ENCODE measurements at regions of chr12 and their contacts with region 1.

Region 1: DNA sequence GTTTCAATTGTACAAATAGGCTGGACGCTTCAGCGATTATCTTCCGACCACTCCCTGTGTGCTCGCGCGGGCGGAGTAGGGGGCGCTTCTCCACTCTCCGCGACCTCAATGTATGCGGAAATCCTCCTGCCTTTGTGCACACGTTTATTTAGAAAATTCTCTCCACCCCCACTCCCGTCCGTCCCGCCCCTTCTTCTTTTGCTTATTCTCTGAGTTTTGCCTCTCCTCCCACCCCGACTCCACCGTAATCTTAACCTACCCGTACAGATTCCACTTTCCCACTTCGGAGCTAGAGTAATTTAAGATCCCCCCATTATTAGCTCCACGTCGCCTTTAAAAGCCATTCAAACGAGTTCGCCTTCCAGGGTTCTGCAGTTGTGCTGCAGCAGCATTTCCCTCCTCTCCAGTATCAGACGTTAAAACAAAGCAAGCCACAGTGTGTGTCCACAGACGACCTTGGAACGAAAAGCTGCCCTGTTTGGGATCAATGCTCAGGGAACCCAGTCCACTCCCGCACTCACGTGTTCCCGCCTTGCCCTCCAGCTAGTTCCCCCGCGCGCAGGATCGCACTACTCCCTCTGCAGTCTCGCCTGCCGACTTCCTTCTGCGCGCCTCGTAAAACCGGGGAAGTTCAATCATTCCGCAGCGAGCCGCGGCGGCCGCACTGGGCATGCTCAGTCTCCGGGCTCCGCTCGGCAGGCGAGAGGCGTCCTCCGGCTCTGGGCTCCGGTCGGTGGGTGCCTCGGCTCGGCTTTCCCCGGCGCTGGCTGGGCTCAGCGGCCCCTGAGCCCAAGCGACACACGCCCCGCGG is at the start of gene ANO6:
- DNase-seq: peak; percentile 84
- ATAC-seq: peak; percentile 84
- H3K4me3 ChIP-seq: peak within 1 kb of the TSS; percentile 60
- H3K27ac ChIP-seq: peak within 1 kb of the TSS; percentile 77
- H3K4me1 ChIP-seq: peaks cover 4% of the 10 kb centered on the region; the same call in 1 of the 2 replicates
- H3K27me3 ChIP-seq: no peaks in the 10 kb centered on the region
- CTCF ChIP-seq: peak; percentile 42
- POLR2A ChIP-seq: peak; percentile 79
- RAD21 ChIP-seq: peak; percentile 42
- total RNA-seq, gene ANO6: 41.0 and 46.7 TPM in 2 replicates

Region 2: DNA sequence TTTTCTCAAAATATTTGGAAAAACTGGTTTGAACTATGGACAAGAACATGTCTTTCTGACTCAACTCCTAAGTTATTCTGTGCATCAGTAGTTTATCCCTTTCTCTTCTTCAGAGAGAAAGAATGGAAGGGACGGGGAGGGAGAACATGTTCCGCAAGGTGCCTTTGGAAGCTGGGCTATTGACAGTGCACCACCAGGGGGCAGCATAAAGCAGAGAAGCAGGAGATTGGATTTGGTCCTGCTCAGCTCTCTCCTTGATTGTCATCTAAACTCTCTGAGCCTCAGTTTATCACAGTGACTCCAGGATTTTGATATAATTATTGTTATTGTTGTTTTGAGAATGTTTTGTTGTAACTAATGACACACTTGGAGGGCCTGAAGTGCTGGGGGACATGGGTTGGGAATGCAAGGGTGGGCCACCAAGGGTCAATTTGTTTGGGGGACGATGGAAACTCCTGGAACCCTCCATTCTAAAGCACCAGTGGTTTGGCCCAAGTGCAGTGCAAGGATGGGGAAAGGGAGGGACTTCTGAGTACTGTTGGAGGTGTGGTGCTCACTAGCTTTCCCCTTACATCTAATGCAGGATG is 45.1 kb before region 1 on chr12:
- CTCF ChIA-PET with region 1: no interaction called
- POLR2A ChIA-PET with region 1: no interaction called
- dilution Hi-C with region 1: no loop called
- in situ Hi-C with region 1: no loop called
- intact Hi-C with region 1: loop called (anchors 1 kb)
- DNase-seq: peak; percentile 77
- ATAC-seq: peak; percentile 87
- H3K4me3 ChIP-seq: no peak overlapping the region
- H3K27ac ChIP-seq: no peak overlapping the region
- H3K4me1 ChIP-seq: no peaks in the 10 kb centered on the region
- H3K27me3 ChIP-seq: peaks cover 2% of the 10 kb centered on the region; the same call in 1 of the 2 replicates
- CTCF ChIP-seq: peak; percentile 88
- POLR2A ChIP-seq: no peak
- RAD21 ChIP-seq: peak; percentile 92

Region 3: GRCh38 chr12:45234139-45234846 is 18.7 kb after region 1 on chr12:
- CTCF ChIA-PET with region 1: interaction called, 3 read pairs
- POLR2A ChIA-PET with region 1: no interaction called
- dilution Hi-C with region 1: no loop called
- in situ Hi-C with region 1: no loop called
- intact Hi-C with region 1: loop called (anchors 1 kb)
- DNase-seq: peak; percentile 98
- ATAC-seq: peak; percentile 82
- H3K4me3 ChIP-seq: no peak overlapping the region
- H3K27ac ChIP-seq: peak overlapping the region; percentile 24; the same call in 1 of the 2 replicates
- H3K4me1 ChIP-seq: peaks cover 19% of the 10 kb centered on the region
- H3K27me3 ChIP-seq: no peaks in the 10 kb centered on the region
- CTCF ChIP-seq: no peak
- POLR2A ChIP-seq: peak; percentile 25
- RAD21 ChIP-seq: peak; percentile 30; the same call in 1 of the 2 replicates

Region 4: GRCh38 chr12:45268672-45269411 is 53.2 kb after region 1 on chr12:
- CTCF ChIA-PET with region 1: no interaction called
- POLR2A ChIA-PET with region 1: no interaction called
- dilution Hi-C with region 1: no loop called
- in situ Hi-C with region 1: no loop called
- intact Hi-C with region 1: loop called (anchors 2 kb)
- DNase-seq: peak; percentile 82
- ATAC-seq: peak; percentile 47
- H3K4me3 ChIP-seq: no peak overlapping the region
- H3K27ac ChIP-seq: no peak overlapping the region
- H3K4me1 ChIP-seq: peaks cover 9% of the 10 kb centered on the region
- H3K27me3 ChIP-seq: no peaks in the 10 kb centered on the region
- CTCF ChIP-seq: peak; percentile 61
- POLR2A ChIP-seq: no peak
- RAD21 ChIP-seq: peak; percentile 63

Region 5: GRCh38 chr12:45336331-45337064 is 120.9 kb after region 1 on chr12:
- CTCF ChIA-PET with region 1: no interaction called
- POLR2A ChIA-PET with region 1: no interaction called
- dilution Hi-C with region 1: no loop called
- in situ Hi-C with region 1: no loop called
- intact Hi-C with region 1: loop called (anchors 2 kb)
- DNase-seq: peak; percentile 99
- ATAC-seq: peak; percentile 79
- H3K4me3 ChIP-seq: no peak overlapping the region
- H3K27ac ChIP-seq: peak overlapping the region; percentile 81; the same call in 1 of the 2 replicates
- H3K4me1 ChIP-seq: no peaks in the 10 kb centered on the region
- H3K27me3 ChIP-seq: no peaks in the 10 kb centered on the region
- CTCF ChIP-seq: no peak
- POLR2A ChIP-seq: no peak
- RAD21 ChIP-seq: no peak

Measured in IMR-90 (cell line).